Left ventricle myocardium inferior (tissue), 1 donor: ENCODE measurements at regions of chr7 and their contacts with region 1.

Region 1: GRCh38 chr7:23712368-23713284 is 2.6 kb downstream of the STK31 start:
- DNase-seq: no peak
- H3K4me3 ChIP-seq: no peak overlapping the region
- H3K27ac ChIP-seq: no peak overlapping the region
- H3K4me1 ChIP-seq: no peaks in the 10 kb centered on the region
- H3K27me3 ChIP-seq: no peaks in the 10 kb centered on the region
- CTCF ChIP-seq: peak; percentile 69

Region 2: GRCh38 chr7:23546897-23547572 is 165.6 kb before region 1 on chr7:
- intact Hi-C with region 1: loop called (anchors 5 kb)
- DNase-seq: peak; percentile 61
- H3K4me3 ChIP-seq: no peak overlapping the region
- H3K27ac ChIP-seq: no peak overlapping the region
- H3K4me1 ChIP-seq: no peaks in the 10 kb centered on the region
- H3K27me3 ChIP-seq: peaks cover 6% of the 10 kb centered on the region
- CTCF ChIP-seq: peak; percentile 95

Region 3: DNA sequence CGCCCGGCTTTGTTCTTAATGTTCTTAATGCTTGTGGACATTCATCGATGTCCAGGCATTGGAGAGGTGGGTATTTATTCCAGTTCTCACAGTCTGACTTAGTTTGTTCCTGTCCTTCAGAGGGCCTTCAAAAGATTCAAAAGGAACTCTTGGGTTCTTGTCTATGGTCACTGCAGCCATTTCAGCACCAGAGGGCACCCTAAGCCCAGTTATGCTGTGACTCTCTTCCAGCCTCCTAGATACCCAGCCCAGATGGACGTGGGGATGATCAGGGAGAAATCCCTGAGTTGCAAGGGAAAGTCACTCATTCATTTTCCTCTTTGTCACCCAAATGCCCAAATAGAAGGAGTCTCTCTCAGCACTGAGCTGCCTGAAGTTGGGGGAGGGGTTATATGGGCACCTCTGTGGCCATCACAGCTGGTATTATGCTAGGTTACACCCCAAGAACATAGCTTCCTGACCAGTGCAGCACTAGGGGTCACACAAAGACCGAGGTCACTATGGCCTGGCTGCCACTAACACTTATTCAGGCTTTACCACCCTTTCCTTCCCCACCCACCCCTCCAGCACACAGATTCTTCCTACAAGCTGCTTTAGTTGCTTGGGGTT is 141.9 kb before region 1 on chr7:
- intact Hi-C with region 1: loop called (anchors 1 kb)
- DNase-seq: peak; percentile 61
- H3K4me3 ChIP-seq: no peak overlapping the region
- H3K27ac ChIP-seq: no peak overlapping the region
- H3K4me1 ChIP-seq: no peaks in the 10 kb centered on the region
- H3K27me3 ChIP-seq: peaks cover 28% of the 10 kb centered on the region
- CTCF ChIP-seq: peak; percentile 86